Activated T-helper 2 cell treated with anti-CD3 and anti-CD28 coated beads, Interferon-gamma antibody, Interleukin-2, Interleukin-4, amounts not matched to agents 10 μg/mL and 5 μg/mL and 100 μg/mL, durations not matched to agents 14 hours and 24 hours and 36 hours (primary cell): ENCODE measurements at regions of chr2 and their contacts with region 1.

Region 1: DNA sequence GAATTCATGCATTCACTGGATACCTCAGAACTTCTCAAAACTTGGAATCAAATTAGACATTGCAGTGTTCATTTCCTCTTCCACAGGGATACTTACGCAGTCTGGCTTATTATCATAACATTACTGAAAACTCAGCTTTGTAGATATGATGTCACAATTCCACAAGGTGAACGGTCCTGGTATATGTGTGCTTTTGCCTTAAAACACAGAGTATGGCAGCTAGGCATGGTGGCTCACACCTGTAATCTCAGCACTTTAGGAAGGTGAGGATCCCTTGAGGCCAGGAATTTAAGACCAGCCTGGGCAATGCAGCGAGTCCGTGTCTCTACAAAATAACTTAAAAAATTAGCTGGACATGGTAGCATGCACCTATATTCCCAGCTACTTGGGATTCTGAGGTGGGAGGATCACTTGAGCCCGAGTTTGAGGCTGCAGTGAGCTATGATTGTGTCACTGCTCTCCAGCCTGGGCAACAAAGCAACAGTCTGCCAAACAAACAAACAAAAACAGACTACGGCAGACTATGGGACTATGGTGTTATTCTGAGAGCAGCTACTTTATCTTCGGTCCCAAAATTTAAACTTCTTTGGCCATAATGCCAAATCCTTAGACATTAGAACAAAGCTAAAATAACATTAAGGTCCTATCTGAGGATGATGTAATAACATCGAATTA is 1191.9 kb upstream of the SLC39A10 start:
- DNase-seq: peak; percentile 8
- H3K4me3 Mint-ChIP-seq: no peak overlapping the region
- H3K27ac Mint-ChIP-seq: no peak overlapping the region
- H3K4me1 Mint-ChIP-seq: no peaks in the 10 kb centered on the region
- H3K27me3 Mint-ChIP-seq: no peaks in the 10 kb centered on the region

Region 2: DNA sequence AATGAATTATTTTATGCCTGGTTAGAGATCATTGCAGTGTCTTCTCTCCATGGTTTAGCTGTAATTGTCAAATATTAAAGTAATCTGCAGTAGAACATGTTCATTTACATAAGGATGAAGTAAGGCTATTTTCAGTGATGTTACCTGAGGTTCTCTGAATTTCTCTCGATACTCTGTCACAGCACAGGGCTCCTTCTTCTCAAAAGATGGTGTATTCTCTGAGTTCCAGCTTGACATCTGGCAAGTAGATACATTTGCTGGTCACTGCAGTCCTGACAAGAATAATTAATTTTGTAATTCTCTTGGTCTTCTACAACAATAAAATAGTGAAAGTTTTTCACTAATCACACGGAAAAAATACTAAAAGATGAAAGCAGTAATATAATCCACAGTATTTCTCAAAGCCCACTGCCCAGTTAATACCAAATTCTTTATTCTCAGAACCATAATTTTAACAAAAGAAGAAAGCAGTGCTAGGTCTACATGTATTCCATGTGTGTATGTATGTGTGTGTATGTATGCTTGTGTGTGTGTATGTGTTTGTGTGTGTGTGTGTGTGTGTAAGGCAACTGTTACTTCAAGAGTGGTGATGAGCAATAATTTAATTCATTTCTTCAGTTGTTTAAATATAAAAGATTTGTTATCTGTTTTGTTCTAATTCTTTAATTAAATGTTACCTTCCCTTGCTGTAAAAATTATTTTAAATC is 26.5 kb after region 1 on chr2:
- intact Hi-C with region 1: loop called (anchors 2 kb)
- DNase-seq: no peak
- H3K4me3 Mint-ChIP-seq: no peak overlapping the region
- H3K27ac Mint-ChIP-seq: no peak overlapping the region
- H3K4me1 Mint-ChIP-seq: no peaks in the 10 kb centered on the region
- H3K27me3 Mint-ChIP-seq: no peaks in the 10 kb centered on the region